Ovary (tissue), 10 donors: ENCODE measurements at regions of chr3 and their contacts with region 1.

Region 1: GRCh38 chr3:53949541-53949940 is 57.9 kb upstream of the SELENOK start:
- DNase-seq: no peak
- H3K4me3 ChIP-seq: no peak overlapping the region
- H3K27ac ChIP-seq: no peak overlapping the region
- H3K4me1 ChIP-seq: no peaks in the 10 kb centered on the region
- H3K27me3 ChIP-seq: no peaks in the 10 kb centered on the region
- CTCF ChIP-seq: no peak
- EP300 ChIP-seq: no peak
- POLR2A ChIP-seq: no peak

Region 2: GRCh38 chr3:55474213-55474632 is 1524.7 kb after region 1 on chr3:
- intact Hi-C with region 1: loop called in 1 of 4 experiments (anchors 5 kb)
- DNase-seq: no peak
- H3K4me3 ChIP-seq: no peak overlapping the region
- H3K27ac ChIP-seq: no peak overlapping the region
- H3K4me1 ChIP-seq: no peaks in the 10 kb centered on the region
- H3K27me3 ChIP-seq: no peaks in the 10 kb centered on the region
- CTCF ChIP-seq: no peak
- EP300 ChIP-seq: no peak
- POLR2A ChIP-seq: no peak